ENCODE measurements at regions of chr17 and their contacts with region 1.

Region 1: GRCh38 chr17:35808962-35809854 is at the start of gene TAF15:
- DNase-seq: peak; percentile 92 to 98 (median 96)
- ATAC-seq: peak; percentile 90 to 92
- H3K4me3 Mint-ChIP-seq: peak within 1 kb of the TSS; percentile 92 to 99 (median 96)
- H3K27ac Mint-ChIP-seq: peak within 1 kb of the TSS; percentile 92 to 100 (median 98)
- H3K4me1 Mint-ChIP-seq: peaks cover 35 to 73% (median 62%) of the 10 kb centered on the region in 4 donors
- H3K27me3 Mint-ChIP-seq: no peaks in the 10 kb centered on the region
- polyA plus RNA-seq, gene TAF15: 15.0 to 20.2 (median 19.9) TPM

Region 2: GRCh38 chr17:35752945-35753764 is 56.1 kb before region 1 on chr17 and contains the start of gene GAS2L2:
- POLR2A ChIA-PET with region 1: no interaction called
- DNase-seq: peak in 1 of 10 donors; percentile 27
- ATAC-seq: no peak
- H3K4me3 Mint-ChIP-seq: no peak within 1 kb of the TSS
- H3K27ac Mint-ChIP-seq: no peak within 1 kb of the TSS
- H3K4me1 Mint-ChIP-seq: peaks cover 3 to 12% (median 6%) of the 10 kb centered on the region in 4 donors
- H3K27me3 Mint-ChIP-seq: peaks cover 19 to 41% (median 30%) of the 10 kb centered on the region in 5 donors
- polyA plus RNA-seq, gene GAS2L2: not detected

Region 3: DNA sequence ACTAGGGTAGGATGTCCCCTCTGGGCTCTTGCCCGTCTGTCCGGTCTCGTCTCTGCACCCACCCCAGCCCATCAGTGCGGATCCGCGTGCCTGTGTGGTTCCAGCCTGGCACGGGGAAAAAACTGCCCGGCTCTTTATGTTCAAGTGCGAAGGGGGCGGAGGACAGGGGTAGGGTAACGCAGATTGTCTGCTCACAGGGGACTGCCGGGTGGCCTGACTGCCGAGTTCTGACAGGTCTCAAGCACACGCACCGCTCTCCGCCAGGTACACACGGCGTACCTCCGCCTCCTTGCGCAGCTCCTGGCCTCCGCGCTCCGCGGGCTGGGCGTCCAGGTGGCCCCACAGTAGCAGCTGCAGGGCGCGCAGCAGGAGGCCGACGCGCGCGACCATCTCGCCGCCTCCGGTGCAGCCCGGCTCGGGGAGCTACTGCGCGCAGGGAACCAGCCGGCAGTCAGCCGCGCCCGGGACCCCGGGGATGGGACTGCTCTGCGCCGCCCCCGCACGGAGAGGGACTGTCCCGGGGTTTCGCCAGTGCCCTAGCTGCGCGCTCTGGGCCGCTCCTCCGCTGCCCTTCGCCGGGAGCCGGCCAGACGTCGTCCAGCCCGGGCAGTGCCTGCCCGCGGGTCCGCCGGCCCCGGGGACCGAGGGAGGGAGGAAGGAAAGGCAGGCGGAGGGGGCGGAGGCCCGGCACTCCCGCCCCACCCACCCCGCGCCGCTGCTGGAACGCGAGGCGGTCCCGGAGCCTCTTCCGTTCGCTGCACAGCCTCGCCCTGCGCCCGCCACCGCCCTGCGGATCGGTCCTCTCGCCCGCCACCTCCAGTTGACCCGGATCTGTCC is 14.0 kb before region 1 on chr17 and contains the start of gene MMP28:
- POLR2A ChIA-PET with region 1: interaction called, 14 read pairs
- DNase-seq: peak in 7 of 10 donors; percentile 31 to 57 (median 48)
- ATAC-seq: peak; percentile 78 to 85
- H3K4me3 Mint-ChIP-seq: peak within 1 kb of the TSS; percentile 79 to 92 (median 84)
- H3K27ac Mint-ChIP-seq: peak within 1 kb of the TSS in 6 of 10 donors; percentile 7 to 70 (median 25)
- H3K4me1 Mint-ChIP-seq: peaks cover 18 to 56% (median 38%) of the 10 kb centered on the region in 4 donors
- H3K27me3 Mint-ChIP-seq: peaks cover 0 to 32% (median 8%) of the 10 kb centered on the region in 5 donors
- polyA plus RNA-seq, gene MMP28: 10.0 to 30.1 (median 13.4) TPM

Region 4: GRCh38 chr17:35819456-35819855 is 10.2 kb after region 1 on chr17:
- POLR2A ChIA-PET with region 1: interaction called, 15 read pairs
- DNase-seq: no peak
- ATAC-seq: no peak
- H3K4me3 Mint-ChIP-seq: peak overlapping the region in 1 of 10 donors; percentile 12
- H3K27ac Mint-ChIP-seq: peak overlapping the region in 7 of 10 donors; percentile 11 to 71 (median 31)
- H3K4me1 Mint-ChIP-seq: peaks cover 21 to 51% (median 43%) of the 10 kb centered on the region in 4 donors
- H3K27me3 Mint-ChIP-seq: no peaks in the 10 kb centered on the region